Colonic mucosa (tissue), 4 donors: ENCODE measurements at regions of chr6 and their contacts with region 1.

Region 1: GRCh38 chr6:39309942-39310531 is 4.2 kb downstream of the KCNK17 start:
- DNase-seq: peak; percentile 83
- H3K4me3 ChIP-seq: no peak overlapping the region
- H3K27ac ChIP-seq: no peak overlapping the region
- H3K4me1 ChIP-seq: peaks cover 11% of the 10 kb centered on the region
- H3K27me3 ChIP-seq: peaks cover 25% of the 10 kb centered on the region
- CTCF ChIP-seq: peak; percentile 74

Region 2: GRCh38 chr6:38871741-38872568 is 438.1 kb before region 1 on chr6:
- intact Hi-C with region 1: loop called (anchors 5 kb)
- DNase-seq: peak; percentile 43
- H3K4me3 ChIP-seq: no peak overlapping the region
- H3K27ac ChIP-seq: no peak overlapping the region
- H3K4me1 ChIP-seq: no peaks in the 10 kb centered on the region
- H3K27me3 ChIP-seq: no peaks in the 10 kb centered on the region
- CTCF ChIP-seq: peak; percentile 88

Region 3: GRCh38 chr6:38973178-38974054 is 336.6 kb before region 1 on chr6:
- intact Hi-C with region 1: loop called (anchors 10 kb)
- DNase-seq: no peak
- H3K4me3 ChIP-seq: no peak overlapping the region
- H3K27ac ChIP-seq: no peak overlapping the region
- H3K4me1 ChIP-seq: no peaks in the 10 kb centered on the region
- H3K27me3 ChIP-seq: peaks cover 5% of the 10 kb centered on the region
- CTCF ChIP-seq: peak; percentile 39

Region 4: GRCh38 chr6:39029156-39030011 is 280.7 kb before region 1 on chr6:
- intact Hi-C with region 1: no loop called
- DNase-seq: peak; percentile 38
- H3K4me3 ChIP-seq: no peak overlapping the region
- H3K27ac ChIP-seq: no peak overlapping the region
- H3K4me1 ChIP-seq: no peaks in the 10 kb centered on the region
- H3K27me3 ChIP-seq: no peaks in the 10 kb centered on the region
- CTCF ChIP-seq: peak; percentile 47

Region 5: DNA sequence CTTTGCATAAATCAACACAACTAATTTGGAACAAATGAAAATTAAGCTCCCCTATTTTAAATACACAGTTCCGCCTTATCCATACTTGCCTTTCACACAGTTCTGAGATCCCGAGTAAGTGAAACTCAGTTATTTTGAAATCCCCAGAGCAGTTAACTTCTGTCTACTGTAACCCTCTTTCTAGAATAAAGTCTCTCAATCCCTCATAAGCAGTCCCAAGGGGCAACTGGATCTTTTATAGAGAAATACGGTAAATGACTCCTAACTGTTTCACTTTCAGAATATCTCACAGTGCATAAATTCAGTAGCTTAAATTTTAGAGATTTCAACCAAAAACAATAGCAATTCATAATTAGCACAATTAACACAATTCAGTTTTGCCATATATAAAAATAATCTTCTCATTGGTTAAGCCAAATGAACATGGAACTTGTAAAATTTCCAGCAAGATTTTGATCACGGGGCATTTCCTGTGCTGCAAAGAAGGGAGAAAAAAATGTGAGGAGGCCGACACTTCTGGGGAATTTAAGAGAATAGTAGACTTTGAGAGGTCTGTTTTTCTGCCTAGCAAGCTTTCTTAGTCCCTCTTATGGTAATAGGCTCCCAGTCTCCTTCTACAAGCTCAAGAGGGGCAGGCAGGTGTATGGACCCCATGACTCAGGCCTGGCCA is 336.8 kb after region 1 on chr6:
- intact Hi-C with region 1: no loop called
- DNase-seq: no peak
- H3K4me3 ChIP-seq: no peak overlapping the region
- H3K27ac ChIP-seq: no peak overlapping the region
- H3K4me1 ChIP-seq: no peaks in the 10 kb centered on the region
- H3K27me3 ChIP-seq: no peaks in the 10 kb centered on the region
- CTCF ChIP-seq: no peak